CD4-positive, alpha-beta memory T cell (primary cell): ENCODE measurements at regions of chr12 and their contacts with region 1.

Region 1: GRCh38 chr12:6965026-6965661 is 5.3 kb downstream of the PHB2 start:
- DNase-seq: peak; percentile 85 to 87 (median 85)
- H3K4me3 ChIP-seq: no peak overlapping the region
- H3K4me3 Mint-ChIP-seq: peak overlapping the region in 1 of 8 donors; percentile 39
- H3K27ac ChIP-seq: peak overlapping the region; percentile 53
- H3K27ac Mint-ChIP-seq: peak overlapping the region; percentile 88 to 94 (median 93)
- H3K4me1 ChIP-seq: peaks cover 68% of the 10 kb centered on the region
- H3K4me1 Mint-ChIP-seq: peaks cover 32 to 63% (median 47%) of the 10 kb centered on the region in 4 donors
- H3K27me3 ChIP-seq: no peaks in the 10 kb centered on the region
- H3K27me3 Mint-ChIP-seq: no peaks in the 10 kb centered on the region

Region 2: DNA sequence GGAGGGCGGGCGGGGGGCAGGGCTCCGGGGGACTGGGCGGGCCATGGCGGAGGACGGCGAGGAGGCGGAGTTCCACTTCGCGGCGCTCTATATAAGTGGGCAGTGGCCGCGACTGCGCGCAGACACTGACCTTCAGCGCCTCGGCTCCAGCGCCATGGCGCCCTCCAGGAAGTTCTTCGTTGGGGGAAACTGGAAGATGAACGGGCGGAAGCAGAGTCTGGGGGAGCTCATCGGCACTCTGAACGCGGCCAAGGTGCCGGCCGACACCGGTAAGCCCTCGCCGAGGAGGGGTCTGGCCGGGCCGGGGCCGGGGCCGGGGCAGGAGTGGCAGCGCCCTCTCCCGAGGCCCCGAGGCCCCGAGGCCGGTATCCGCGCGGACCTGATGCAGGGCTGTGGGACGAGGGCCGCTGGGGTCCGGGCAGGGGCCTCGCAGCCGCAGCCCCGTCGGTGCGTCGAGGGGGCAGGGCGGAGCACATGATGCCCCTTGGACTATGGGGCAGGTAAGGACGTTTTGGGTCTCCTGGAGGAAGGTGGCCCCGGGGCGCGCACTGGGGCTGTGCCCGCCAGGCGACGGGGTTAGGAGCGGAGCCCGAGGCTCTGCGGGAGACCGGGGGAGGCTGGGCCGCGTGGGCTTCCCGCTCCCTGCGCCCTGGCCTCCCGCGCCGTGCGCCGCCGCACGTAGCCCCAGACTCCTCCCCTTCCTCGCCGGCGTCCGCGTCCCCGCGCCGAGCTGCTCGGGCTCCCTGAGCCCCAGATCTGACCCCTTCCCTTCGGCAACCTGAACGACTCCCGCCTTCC is 97.5 kb before region 1 on chr12 and contains the start of gene TPI1:
- CTCF ChIA-PET with region 1: interaction called, 14 read pairs
- POLR2A ChIA-PET with region 1: interaction called, 51 read pairs
- intact Hi-C with region 1: loop called (anchors 1 kb)
- DNase-seq: peak; percentile 59 to 68 (median 62)
- H3K4me3 ChIP-seq: peak within 1 kb of the TSS; percentile 36 to 67
- H3K4me3 Mint-ChIP-seq: peak within 1 kb of the TSS; percentile 89 to 96 (median 92)
- H3K27ac ChIP-seq: peak within 1 kb of the TSS; percentile 69
- H3K27ac Mint-ChIP-seq: peak within 1 kb of the TSS; percentile 91 to 97 (median 93)
- H3K4me1 ChIP-seq: peaks cover 51% of the 10 kb centered on the region
- H3K4me1 Mint-ChIP-seq: peaks cover 33 to 58% (median 48%) of the 10 kb centered on the region in 4 donors
- H3K27me3 ChIP-seq: no peaks in the 10 kb centered on the region
- H3K27me3 Mint-ChIP-seq: no peaks in the 10 kb centered on the region
- total RNA-seq, gene TPI1: 155 to 164 TPM

Region 3: DNA sequence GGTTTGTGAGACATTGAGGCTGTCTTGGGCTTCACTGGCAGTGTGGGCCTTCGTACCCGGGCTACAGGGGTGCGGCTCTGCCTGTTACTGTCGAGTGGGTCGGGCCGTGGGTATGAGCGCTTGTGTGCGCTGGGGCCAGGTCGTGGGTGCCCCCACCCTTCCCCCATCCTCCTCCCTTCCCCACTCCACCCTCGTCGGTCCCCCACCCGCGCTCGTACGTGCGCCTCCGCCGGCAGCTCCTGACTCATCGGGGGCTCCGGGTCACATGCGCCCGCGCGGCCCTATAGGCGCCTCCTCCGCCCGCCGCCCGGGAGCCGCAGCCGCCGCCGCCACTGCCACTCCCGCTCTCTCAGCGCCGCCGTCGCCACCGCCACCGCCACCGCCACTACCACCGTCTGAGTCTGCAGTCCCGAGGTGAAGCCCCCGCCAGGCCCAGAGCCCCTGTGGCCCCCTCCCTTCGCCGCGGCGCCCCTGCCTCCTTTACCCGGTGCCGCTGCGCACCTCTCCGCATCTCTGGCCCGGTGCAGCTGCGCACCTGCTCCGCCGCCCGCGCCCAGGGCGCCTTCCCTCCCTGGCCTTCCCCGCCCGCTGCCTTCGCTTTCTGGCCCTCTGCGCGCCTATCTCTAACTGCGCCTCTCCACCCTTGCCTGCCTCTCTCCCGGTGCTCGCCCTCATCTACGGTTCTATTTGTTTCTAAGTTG is 50.7 kb before region 1 on chr12 and contains the start of gene ENO2:
- CTCF ChIA-PET with region 1: interaction called, 4 read pairs
- POLR2A ChIA-PET with region 1: interaction called, 16 read pairs
- intact Hi-C with region 1: no loop called
- DNase-seq: peak; percentile 83 to 93 (median 85)
- H3K4me3 ChIP-seq: peak within 1 kb of the TSS; percentile 69 to 76
- H3K4me3 Mint-ChIP-seq: peak within 1 kb of the TSS; percentile 90 to 98 (median 96)
- H3K27ac ChIP-seq: peak within 1 kb of the TSS; percentile 77
- H3K27ac Mint-ChIP-seq: peak within 1 kb of the TSS; percentile 88 to 98 (median 96)
- H3K4me1 ChIP-seq: peaks cover 29% of the 10 kb centered on the region
- H3K4me1 Mint-ChIP-seq: peaks cover 12 to 44% (median 27%) of the 10 kb centered on the region in 4 donors
- H3K27me3 ChIP-seq: no peaks in the 10 kb centered on the region
- H3K27me3 Mint-ChIP-seq: no peaks in the 10 kb centered on the region
- total RNA-seq, gene ENO2: 187 to 190 TPM

Region 4: DNA sequence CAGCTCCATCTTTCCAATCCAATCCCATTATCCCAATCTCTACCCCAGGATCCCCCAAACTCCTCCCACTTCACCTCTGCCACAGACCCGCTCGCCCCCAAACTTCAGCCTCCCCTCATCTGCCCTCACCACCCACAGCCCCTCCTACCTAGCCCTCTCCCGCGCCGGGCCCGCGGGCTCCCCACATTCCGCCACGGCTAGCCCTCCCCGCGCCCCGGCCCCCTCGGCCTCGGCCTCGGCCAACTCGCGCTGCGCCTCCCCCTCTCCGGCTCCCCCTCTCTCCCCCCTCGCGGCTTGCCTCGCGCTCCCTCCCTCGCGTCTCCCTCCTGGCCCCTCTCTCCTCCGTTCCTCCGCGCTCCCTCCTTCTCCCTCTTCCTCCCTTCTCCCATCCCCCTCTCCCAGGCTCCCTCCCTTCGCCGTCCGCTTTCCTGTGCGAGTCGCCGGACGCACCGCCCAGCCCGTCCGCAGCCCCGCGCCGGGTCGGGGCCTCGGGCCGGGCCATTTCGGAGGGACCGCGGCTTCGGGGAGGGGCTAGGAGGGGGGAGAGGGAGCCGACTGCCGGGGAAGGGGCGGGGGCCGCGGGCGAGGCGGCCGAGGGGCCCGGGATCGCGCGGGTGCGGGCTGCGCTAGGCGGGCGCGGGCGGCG is 37.6 kb before region 1 on chr12 and contains the start of gene ATN1:
- CTCF ChIA-PET with region 1: interaction called, 48 read pairs
- POLR2A ChIA-PET with region 1: interaction called, 86 read pairs
- intact Hi-C with region 1: loop called (anchors 1 kb)
- DNase-seq: peak; percentile 37 to 65 (median 45)
- H3K4me3 ChIP-seq: peak within 1 kb of the TSS; percentile 57 to 65
- H3K4me3 Mint-ChIP-seq: peak within 1 kb of the TSS; percentile 88 to 94 (median 90)
- H3K27ac ChIP-seq: peak within 1 kb of the TSS; percentile 67
- H3K27ac Mint-ChIP-seq: peak within 1 kb of the TSS; percentile 91 to 97 (median 94)
- H3K4me1 ChIP-seq: peaks cover 43% of the 10 kb centered on the region
- H3K4me1 Mint-ChIP-seq: peaks cover 31 to 57% (median 43%) of the 10 kb centered on the region in 4 donors
- H3K27me3 ChIP-seq: no peaks in the 10 kb centered on the region
- H3K27me3 Mint-ChIP-seq: no peaks in the 10 kb centered on the region
- total RNA-seq, gene ATN1: 32.2 to 33.0 TPM

Region 5: GRCh38 chr12:6944381-6945186 is 20.6 kb before region 1 on chr12:
- CTCF ChIA-PET with region 1: interaction called, 774 read pairs
- POLR2A ChIA-PET with region 1: interaction called, 1,807 read pairs
- intact Hi-C with region 1: loop called (anchors 1 kb)
- DNase-seq: peak; percentile 84 to 90 (median 85)
- H3K4me3 ChIP-seq: peak overlapping the region; percentile 87 to 90
- H3K4me3 Mint-ChIP-seq: peak overlapping the region; percentile 91 to 99 (median 98)
- H3K27ac ChIP-seq: peak overlapping the region; percentile 91
- H3K27ac Mint-ChIP-seq: peak overlapping the region; percentile 95 to 100 (median 98)
- H3K4me1 ChIP-seq: peaks cover 66% of the 10 kb centered on the region
- H3K4me1 Mint-ChIP-seq: peaks cover 37 to 74% (median 60%) of the 10 kb centered on the region in 4 donors
- H3K27me3 ChIP-seq: no peaks in the 10 kb centered on the region
- H3K27me3 Mint-ChIP-seq: no peaks in the 10 kb centered on the region

Region 6: DNA sequence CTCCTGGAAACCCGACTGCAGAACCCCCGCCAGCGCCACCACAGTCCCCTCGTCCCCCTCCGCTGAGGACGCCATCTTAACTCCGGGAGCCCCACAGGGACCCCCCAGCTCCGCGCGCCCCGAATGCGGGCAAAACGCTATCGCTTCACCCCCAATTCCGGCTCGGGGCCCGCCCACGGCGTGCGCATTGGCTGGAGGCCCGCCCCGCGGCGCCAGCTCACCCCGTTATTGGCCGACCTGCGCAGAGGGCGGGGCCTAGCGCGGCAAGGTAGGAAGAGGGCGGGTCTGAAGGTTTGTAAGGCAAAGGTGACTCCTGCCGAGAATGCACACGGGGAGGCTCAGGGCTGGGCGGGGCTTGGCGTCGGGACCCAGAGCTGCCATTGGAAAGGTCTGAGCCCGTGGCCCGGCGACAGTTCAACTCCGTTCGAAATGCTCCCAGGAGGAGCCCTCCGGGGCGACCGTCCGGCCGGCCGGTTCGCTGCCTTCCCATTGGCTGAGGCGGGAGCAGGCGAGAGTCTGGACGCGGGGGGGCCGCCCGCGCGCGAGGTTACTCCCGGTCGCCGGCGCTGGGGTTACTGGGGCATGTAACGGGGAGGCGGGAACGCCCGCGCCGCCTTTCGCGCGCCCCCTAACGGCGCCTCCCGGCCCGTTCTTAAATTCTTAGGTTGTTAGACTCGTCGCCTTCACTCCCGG is 53.4 kb after region 1 on chr12 and contains the start of gene LPCAT3:
- CTCF ChIA-PET with region 1: interaction called, 3 read pairs
- POLR2A ChIA-PET with region 1: interaction called, 8 read pairs
- intact Hi-C with region 1: loop called (anchors 1 kb)
- DNase-seq: peak; percentile 98 to 99 (median 98)
- H3K4me3 ChIP-seq: peak within 1 kb of the TSS; percentile 72 to 76
- H3K4me3 Mint-ChIP-seq: peak within 1 kb of the TSS; percentile 86 to 99 (median 95)
- H3K27ac ChIP-seq: peak within 1 kb of the TSS; percentile 85
- H3K27ac Mint-ChIP-seq: peak within 1 kb of the TSS; percentile 90 to 98 (median 95)
- H3K4me1 ChIP-seq: peaks cover 23% of the 10 kb centered on the region
- H3K4me1 Mint-ChIP-seq: peaks cover 18 to 37% (median 24%) of the 10 kb centered on the region in 4 donors
- H3K27me3 ChIP-seq: no peaks in the 10 kb centered on the region
- H3K27me3 Mint-ChIP-seq: no peaks in the 10 kb centered on the region
- total RNA-seq, gene LPCAT3: 18.3 to 21.6 TPM

Region 7: DNA sequence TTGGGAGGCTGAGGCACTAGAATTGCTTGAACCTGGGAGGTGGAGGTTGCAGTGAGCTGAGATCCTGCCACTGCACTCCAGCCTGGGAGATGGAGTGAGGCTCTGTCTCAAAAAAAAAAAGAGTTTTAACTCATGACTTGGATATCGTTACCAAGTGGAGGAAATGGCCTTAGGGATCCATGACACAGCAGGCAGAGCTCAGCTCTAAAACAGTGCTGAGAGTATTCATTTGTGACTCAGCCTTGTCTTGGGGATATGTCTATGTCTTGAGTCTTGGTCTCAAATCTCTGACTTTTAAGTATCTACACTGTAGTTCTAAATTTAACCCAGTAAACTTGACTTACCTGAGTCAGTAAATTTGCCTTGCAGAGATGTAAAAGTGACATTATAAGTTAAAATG is 215.5 kb after region 1 on chr12:
- CTCF ChIA-PET with region 1: no interaction called
- POLR2A ChIA-PET with region 1: no interaction called
- intact Hi-C with region 1: no loop called
- DNase-seq: no peak
- H3K4me3 ChIP-seq: no peak overlapping the region
- H3K4me3 Mint-ChIP-seq: no peak overlapping the region
- H3K27ac ChIP-seq: no peak overlapping the region
- H3K27ac Mint-ChIP-seq: no peak overlapping the region
- H3K4me1 ChIP-seq: no peaks in the 10 kb centered on the region
- H3K4me1 Mint-ChIP-seq: peaks cover 0 to 2% (median 0%) of the 10 kb centered on the region in 4 donors
- H3K27me3 ChIP-seq: no peaks in the 10 kb centered on the region
- H3K27me3 Mint-ChIP-seq: peaks cover 22 to 36% of the 10 kb centered on the region in 2 donors

Region 8: DNA sequence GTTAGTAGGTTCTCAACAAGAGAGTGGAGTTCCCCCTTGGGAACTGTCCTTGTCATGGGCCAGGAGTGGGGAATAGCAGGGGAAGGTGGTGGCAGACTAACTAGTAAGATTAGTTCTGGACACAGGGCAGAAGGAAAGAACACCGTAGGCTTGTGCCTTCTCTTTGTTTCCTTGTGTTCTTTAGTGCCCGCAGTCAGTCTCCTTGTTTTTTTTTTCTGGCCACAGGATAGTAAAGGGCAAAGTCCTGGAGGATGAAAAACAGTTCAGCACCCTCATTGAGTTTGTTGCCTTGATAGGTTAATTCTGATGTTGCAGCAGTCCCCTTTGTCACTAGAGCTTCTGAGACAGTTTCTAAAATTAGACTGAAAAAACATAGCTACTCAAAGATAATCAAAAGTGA is 232.7 kb after region 1 on chr12:
- CTCF ChIA-PET with region 1: no interaction called
- POLR2A ChIA-PET with region 1: no interaction called
- intact Hi-C with region 1: no loop called
- DNase-seq: no peak
- H3K4me3 ChIP-seq: no peak overlapping the region
- H3K4me3 Mint-ChIP-seq: no peak overlapping the region
- H3K27ac ChIP-seq: no peak overlapping the region
- H3K27ac Mint-ChIP-seq: peak overlapping the region in 2 of 7 donors; percentile 1 to 12
- H3K4me1 ChIP-seq: peaks cover 5% of the 10 kb centered on the region
- H3K4me1 Mint-ChIP-seq: peaks cover 7 to 22% (median 16%) of the 10 kb centered on the region in 4 donors
- H3K27me3 ChIP-seq: no peaks in the 10 kb centered on the region
- H3K27me3 Mint-ChIP-seq: no peaks in the 10 kb centered on the region